ENCODE measurements at regions of chr11 and their contacts with region 1.

Region 1: DNA sequence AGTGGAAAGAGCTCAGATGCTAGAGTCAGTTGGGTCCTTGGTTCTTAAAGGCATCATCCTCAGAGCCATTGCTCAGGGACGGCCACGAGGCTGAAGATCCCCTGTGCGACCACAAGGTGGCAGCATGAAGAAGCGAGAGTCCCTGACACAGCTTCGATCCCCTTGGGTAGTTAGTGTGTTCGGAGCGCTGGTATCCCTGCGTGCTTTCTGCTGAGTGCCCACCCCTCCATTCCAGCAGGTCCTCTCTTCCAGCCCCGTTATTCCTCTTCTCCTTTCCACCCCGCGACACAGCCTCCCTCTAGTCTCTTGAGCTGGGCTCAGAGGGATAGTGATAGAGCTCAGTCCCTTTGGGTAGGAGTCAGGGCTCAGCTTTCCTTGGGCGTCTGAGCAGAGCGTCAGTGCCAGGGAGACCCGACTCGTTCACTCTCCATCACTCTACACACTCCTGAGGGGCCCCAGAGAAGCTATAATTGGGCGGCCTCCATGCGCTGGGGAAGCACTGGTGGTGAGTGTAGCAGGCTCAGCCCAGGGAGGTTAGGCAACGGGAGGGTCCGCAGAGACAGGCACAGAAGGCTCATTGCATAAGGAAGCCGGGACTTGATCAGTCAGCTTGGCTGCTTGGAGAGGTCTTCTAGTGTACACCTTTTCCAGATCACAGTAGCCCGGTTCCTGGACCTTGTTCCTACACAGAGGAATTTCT is at the start of gene OR51D1:
- DNase-seq: peak; percentile 61
- H3K27ac ChIP-seq: no peak within 1 kb of the TSS
- CTCF ChIP-seq: peak; percentile 73

Region 2: GRCh38 chr11:4626207-4627099 is 10.7 kb before region 1 on chr11:
- CTCF ChIA-PET with region 1: interaction called, 12 read pairs
- POLR2A ChIA-PET with region 1: no interaction called
- DNase-seq: peak; percentile 44
- H3K27ac ChIP-seq: no peak overlapping the region
- CTCF ChIP-seq: peak; percentile 65

Region 3: GRCh38 chr11:4658629-4659445 is 21.7 kb after region 1 on chr11:
- CTCF ChIA-PET with region 1: no interaction called
- POLR2A ChIA-PET with region 1: no interaction called
- DNase-seq: no peak
- H3K27ac ChIP-seq: no peak overlapping the region
- CTCF ChIP-seq: no peak

Region 4: DNA sequence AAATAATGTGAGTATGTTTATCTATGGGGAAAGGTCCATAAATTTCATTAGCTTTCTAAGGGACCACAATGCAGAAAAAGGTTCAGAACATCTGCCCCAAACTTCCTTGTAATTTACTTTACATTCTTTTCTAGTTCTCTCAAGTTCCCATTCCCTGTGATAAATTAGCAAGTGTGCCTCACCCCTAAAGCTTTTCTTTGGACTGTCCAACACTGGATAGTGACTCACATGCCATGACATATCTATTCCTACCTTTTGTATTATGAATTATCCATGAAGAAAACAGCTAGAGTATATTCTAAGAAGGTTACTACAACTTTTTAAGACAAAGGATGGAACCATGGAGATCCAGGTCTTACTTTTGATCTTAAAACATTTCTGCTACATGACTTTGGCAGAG is 131.0 kb after region 1 on chr11:
- CTCF ChIA-PET with region 1: no interaction called
- POLR2A ChIA-PET with region 1: no interaction called
- DNase-seq: no peak
- H3K27ac ChIP-seq: no peak overlapping the region
- CTCF ChIP-seq: no peak

Measured in RWPE1 (cell line).